Activated CD4-positive, alpha-beta T cell treated with anti-CD3 and anti-CD28 coated beads, Interleukin-2, amount 10 ng/mL, durations not matched to agents 24 days and 14 days (primary cell): ENCODE measurements at regions of chr6 and their contacts with region 1.

Region 1: GRCh38 chr6:43174263-43175112 is 3.4 kb downstream of the SRF start:
- DNase-seq: peak; percentile 99
- H3K4me3 Mint-ChIP-seq: peak overlapping the region; percentile 94
- H3K27ac Mint-ChIP-seq: peak overlapping the region; percentile 84
- H3K4me1 Mint-ChIP-seq: peaks cover 39% of the 10 kb centered on the region
- H3K27me3 Mint-ChIP-seq: no peaks in the 10 kb centered on the region

Region 2: GRCh38 chr6:42745707-42746462 is 428.6 kb before region 1 on chr6 and contains the start of gene TBCC:
- intact Hi-C with region 1: loop called (anchors 1 kb)
- DNase-seq: peak; percentile 97
- H3K4me3 Mint-ChIP-seq: peak within 1 kb of the TSS; percentile 92
- H3K27ac Mint-ChIP-seq: peak within 1 kb of the TSS; percentile 100
- H3K4me1 Mint-ChIP-seq: peaks cover 22% of the 10 kb centered on the region
- H3K27me3 Mint-ChIP-seq: no peaks in the 10 kb centered on the region
- total RNA-seq, gene TBCC: 18.4 TPM in 2 replicates

Region 3: DNA sequence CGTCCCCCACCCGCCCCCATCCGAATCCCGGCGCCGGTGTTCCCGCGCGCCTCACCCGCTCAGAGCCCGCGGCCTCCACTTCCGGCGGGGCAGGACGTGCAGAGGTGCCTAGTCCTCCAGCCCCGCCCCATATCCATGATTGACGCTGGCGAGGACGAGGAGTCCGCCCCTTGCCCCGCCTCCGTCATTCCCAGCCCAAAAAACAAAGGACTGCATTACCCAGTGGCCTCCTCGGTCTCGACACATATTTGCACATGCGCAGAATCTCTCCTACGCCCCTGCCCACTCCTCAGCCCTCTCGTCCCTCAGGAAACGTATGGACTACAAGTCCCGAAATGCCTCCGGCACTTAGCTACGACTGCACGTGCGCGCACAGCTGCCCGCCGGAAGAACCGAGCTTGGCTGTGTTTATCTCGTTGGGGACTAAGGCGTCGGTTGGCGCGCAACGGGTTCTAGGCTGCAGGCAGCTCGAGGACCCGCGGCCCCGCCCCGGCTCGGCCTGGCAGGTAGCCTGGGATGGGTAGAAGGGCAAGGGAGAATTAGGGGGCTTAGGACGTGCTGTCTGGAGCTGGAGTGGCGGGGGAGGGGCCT is 160.6 kb before region 1 on chr6 and contains the starts of genes KLHDC3 and MEA1:
- intact Hi-C with region 1: loop called (anchors 1 kb)
- DNase-seq: peak; percentile 100
- H3K4me3 Mint-ChIP-seq: peak within 1 kb of the TSS; percentile 99
- H3K27ac Mint-ChIP-seq: peak within 1 kb of the TSS; percentile 92
- H3K4me1 Mint-ChIP-seq: peaks cover 44% of the 10 kb centered on the region
- H3K27me3 Mint-ChIP-seq: no peaks in the 10 kb centered on the region
- total RNA-seq, gene KLHDC3: 73.8 and 77.5 TPM in 2 replicates
- total RNA-seq, gene MEA1: 93.5 and 94.3 TPM in 2 replicates

Region 4: GRCh38 chr6:43150051-43150751 is 24.3 kb before region 1 on chr6:
- intact Hi-C with region 1: no loop called
- DNase-seq: no peak
- H3K4me3 Mint-ChIP-seq: no peak overlapping the region
- H3K27ac Mint-ChIP-seq: no peak overlapping the region
- H3K4me1 Mint-ChIP-seq: peaks cover 4% of the 10 kb centered on the region
- H3K27me3 Mint-ChIP-seq: peaks cover 4% of the 10 kb centered on the region

Region 5: DNA sequence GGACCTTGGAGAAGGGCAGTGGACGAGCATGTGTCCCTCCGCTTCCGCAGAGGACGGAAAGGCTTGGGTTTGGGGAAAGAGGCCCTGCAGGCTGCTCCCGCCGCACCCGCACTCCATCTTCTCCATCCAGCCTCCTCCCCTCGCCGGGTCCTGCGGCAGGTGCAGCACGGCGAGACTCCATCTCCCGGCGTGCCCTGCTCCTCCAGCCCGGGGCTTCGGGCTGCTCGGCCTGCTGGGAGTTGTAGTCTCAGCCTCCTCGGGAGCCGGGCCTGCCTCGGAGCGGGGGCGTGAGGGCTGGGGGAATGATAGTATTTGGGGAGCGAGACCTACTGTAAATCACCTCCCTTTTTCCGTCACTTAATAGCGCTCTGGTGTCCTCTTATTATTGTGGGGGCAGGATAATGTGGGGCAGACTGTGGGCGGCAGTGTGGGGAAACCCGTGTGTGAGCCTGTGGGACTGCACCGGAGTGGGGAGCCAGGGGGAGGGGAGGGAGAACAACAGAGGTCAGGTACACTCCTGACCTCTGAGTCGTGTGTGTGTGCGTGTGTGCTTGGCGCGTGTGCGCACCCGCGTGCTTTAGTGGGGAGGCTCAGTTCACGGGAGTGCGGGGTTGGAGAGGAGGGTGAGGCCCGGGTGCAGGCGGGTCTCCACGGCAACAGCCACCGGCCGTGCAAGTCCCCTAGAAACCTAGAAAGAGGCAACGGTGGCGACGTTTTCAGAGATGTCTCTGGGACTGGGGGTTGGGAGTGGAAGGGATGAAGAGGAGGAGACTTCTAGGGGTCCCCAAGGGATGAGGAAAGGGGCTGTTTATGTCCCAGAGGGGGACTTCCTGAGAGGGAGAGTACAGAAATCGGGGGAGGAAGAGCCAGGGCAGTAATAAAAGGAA is 72.9 kb after region 1 on chr6:
- intact Hi-C with region 1: loop called (anchors 5 kb)
- DNase-seq: peak; percentile 94
- H3K4me3 Mint-ChIP-seq: peak overlapping the region; percentile 82
- H3K27ac Mint-ChIP-seq: peak overlapping the region; percentile 91
- H3K4me1 Mint-ChIP-seq: peaks cover 30% of the 10 kb centered on the region
- H3K27me3 Mint-ChIP-seq: peaks cover 26% of the 10 kb centered on the region

Region 6: DNA sequence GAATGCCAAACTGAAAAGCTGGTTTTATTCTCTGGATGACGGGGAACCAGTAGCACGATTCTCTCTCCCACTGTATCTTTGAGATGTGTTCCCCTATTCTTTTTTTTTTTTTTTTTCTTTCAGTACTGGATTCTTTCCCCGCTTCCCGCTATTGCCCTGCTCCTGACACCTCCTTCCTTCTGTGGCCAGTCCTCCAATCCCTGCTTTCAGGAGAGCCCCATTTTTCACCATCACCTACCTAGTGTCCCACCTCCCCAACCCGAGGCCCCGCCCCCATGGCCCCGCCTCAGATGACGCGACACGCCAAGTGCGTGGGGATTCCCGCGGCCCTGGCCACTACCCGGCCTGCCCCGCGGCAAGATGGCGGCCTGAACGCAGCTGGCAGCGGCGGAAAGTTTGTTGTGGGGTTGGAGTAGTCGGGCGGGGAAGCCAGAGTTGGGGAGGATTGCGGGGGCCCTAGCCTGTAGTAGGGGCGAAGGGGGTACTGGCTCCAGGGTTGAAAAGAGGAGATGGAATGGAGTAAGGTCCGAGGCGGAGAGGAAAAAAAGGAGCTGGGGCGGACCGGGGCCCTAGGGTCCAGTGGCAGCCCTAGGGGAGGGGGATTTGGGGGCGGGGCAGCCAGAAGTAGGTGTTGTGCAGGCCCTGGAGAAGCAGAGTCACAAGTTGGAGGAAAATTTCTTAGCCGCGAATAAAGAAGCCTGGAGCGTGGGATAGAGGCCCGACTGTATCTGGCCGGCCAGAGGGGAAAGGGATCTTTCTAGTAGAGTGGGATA is 302.9 kb after region 1 on chr6 and contains the start of gene TJAP1:
- intact Hi-C with region 1: loop called (anchors 5 kb)
- DNase-seq: peak; percentile 99
- H3K4me3 Mint-ChIP-seq: peak within 1 kb of the TSS; percentile 100
- H3K27ac Mint-ChIP-seq: peak within 1 kb of the TSS; percentile 98
- H3K4me1 Mint-ChIP-seq: peaks cover 35% of the 10 kb centered on the region
- H3K27me3 Mint-ChIP-seq: no peaks in the 10 kb centered on the region
- total RNA-seq, gene TJAP1: 40.7 and 41.1 TPM in 2 replicates

Region 7: DNA sequence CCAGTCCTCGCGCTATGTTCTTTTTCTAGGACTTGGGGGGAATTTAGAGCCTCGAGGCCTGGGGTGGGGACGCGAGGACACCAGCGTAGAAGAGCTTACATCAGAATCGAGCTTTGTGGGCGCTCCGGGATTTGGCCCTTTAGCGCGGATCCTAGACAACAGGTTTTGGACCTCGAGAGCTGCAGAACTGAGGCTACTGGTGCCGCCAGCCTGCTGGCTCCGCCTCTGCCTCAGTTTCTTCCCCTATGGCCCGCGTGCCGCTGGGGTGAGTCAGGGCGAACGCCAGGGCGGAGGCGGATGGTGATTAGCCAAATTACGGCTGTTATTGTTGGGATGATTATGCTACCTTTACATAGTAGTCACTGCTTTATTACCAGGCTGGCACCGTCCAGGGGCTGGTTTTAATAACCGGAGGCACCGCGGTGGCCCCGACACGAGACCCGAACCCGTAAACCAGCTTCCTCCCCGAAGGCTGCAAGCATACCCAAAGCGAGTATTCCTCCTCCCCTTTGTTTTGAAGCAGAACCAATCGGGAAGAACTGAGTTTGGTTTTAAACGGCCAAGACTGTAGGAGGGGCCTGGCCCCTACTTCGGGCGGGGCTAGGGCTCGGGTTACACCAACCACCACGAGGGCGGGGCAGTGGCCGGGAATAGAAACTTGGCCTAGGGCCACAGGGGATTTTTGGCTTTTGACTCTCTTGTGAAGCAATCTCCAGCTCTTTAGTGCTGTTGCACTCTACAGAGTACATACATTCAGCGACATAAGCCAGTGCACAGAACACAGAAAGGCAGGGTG is 455.2 kb after region 1 on chr6:
- intact Hi-C with region 1: loop called (anchors 5 kb)
- DNase-seq: peak; percentile 98
- H3K4me3 Mint-ChIP-seq: peak overlapping the region; percentile 99
- H3K27ac Mint-ChIP-seq: peak overlapping the region; percentile 99
- H3K4me1 Mint-ChIP-seq: peaks cover 38% of the 10 kb centered on the region
- H3K27me3 Mint-ChIP-seq: no peaks in the 10 kb centered on the region